ENCODE measurements at regions of chr3 and their contacts with region 1.

Region 1: GRCh38 chr3:111904376-111905241 is 45.5 kb downstream of the PHLDB2 start:
- ATAC-seq: peak in 7 of 8 experiments; percentile 39 to 87 (median 73)
- H3K4me3 ChIP-seq: no peak overlapping the region
- H3K27ac ChIP-seq: no peak overlapping the region
- H3K4me1 ChIP-seq: peaks cover 3 to 12% of the 10 kb centered on the region in 2 donors

Region 2: GRCh38 chr3:111648991-111649579 is 255.5 kb before region 1 on chr3:
- in situ Hi-C with region 1: no loop called
- ATAC-seq: no peak
- H3K4me3 ChIP-seq: no peak overlapping the region
- H3K27ac ChIP-seq: no peak overlapping the region
- H3K4me1 ChIP-seq: peaks cover 0 to 3% of the 10 kb centered on the region in 2 donors

Region 3: DNA sequence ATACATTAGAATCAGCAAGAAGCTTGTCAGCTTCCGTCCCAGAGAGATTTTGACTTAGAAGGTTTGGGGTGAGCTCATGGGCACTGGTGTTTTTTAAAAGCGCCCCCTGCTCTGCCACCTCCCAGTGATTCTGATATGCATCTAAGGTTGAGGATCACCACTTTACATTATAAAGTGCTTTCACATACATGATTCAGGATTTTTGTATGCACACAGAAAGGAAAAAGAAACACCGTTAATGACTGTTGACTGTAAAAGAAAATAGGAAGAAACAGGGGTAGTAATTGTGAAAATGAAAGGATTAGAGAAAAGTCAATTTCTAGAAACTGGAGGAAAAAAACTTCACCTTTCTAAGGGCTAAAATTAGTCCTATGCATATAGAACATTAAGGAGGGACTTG is 204.6 kb before region 1 on chr3:
- in situ Hi-C with region 1: no loop called
- ATAC-seq: no peak
- H3K4me3 ChIP-seq: no peak overlapping the region
- H3K27ac ChIP-seq: no peak overlapping the region
- H3K4me1 ChIP-seq: peaks cover 0 to 9% of the 10 kb centered on the region in 2 donors

Region 4: GRCh38 chr3:111761309-111761831 is 143.2 kb before region 1 on chr3:
- in situ Hi-C with region 1: no loop called
- ATAC-seq: peak in 2 of 8 experiments; percentile 47 to 86
- H3K4me3 ChIP-seq: no peak overlapping the region
- H3K27ac ChIP-seq: no peak overlapping the region
- H3K4me1 ChIP-seq: no peaks in the 10 kb centered on the region

Region 5: DNA sequence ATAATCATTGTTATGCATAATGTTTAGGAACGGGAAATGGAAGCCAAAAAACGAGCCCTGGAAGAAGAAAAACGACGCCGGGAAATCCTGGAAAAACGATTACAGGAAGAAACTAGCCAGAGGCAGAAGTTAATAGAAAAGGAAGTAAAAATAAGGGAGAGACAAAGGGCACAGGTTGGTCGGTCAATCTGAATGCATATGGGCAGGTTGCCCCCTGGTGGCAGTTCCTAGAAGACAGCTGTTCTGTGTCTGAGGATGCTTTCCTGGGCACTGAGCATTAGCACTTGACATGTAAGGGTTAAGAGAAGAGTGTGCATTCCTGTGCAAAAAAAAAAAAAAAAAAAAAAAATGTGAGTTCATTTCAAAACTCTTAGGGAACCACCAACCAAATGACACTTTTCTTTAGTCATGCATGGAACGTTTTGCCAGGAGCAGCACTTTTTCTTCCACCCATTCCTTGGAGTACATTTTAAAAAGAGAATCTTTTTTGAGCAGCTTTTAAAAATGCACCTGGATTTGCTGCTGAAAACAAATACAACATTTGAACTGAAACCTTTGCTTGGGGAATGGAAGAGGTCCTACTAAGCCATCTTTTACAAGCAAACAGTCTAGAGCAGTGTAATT is 63.2 kb after region 1 on chr3:
- in situ Hi-C with region 1: loop called in 1 of 9 experiments (anchors 5 kb)
- ATAC-seq: peak; percentile 46 to 97 (median 74)
- H3K4me3 ChIP-seq: no peak overlapping the region
- H3K27ac ChIP-seq: no peak overlapping the region
- H3K4me1 ChIP-seq: peaks cover 8 to 31% of the 10 kb centered on the region in 2 donors

Region 6: GRCh38 chr3:112043603-112044201 is 139.1 kb after region 1 on chr3:
- in situ Hi-C with region 1: loop called in 1 of 9 experiments (anchors 25 kb)
- ATAC-seq: peak; percentile 25 to 82 (median 80)
- H3K4me3 ChIP-seq: no peak overlapping the region
- H3K27ac ChIP-seq: no peak overlapping the region
- H3K4me1 ChIP-seq: peaks cover 20% of the 10 kb centered on the region in 2 donors